HCT116 (cell line): ENCODE measurements at regions of chr15 and their contacts with region 1.

Region 1: GRCh38 chr15:74540761-74541493 is at the start of gene ARID3B:
- DNase-seq: peak; percentile 95
- ATAC-seq: peak; percentile 97
- H3K4me3 ChIP-seq: peak within 1 kb of the TSS; percentile 88 to 91
- H3K27ac ChIP-seq: peak within 1 kb of the TSS; percentile 72
- H3K4me1 ChIP-seq: peaks cover 15 to 36% of the 10 kb centered on the region in 2 experiments
- H3K27me3 ChIP-seq: peaks cover 10% of the 10 kb centered on the region; the same call in 1 of the 2 replicates
- CTCF ChIP-seq: no peak
- POLR2A ChIP-seq: peak; percentile 23
- RAD21 ChIP-seq: no peak
- total RNA-seq, gene ARID3B: 8.1 TPM

Region 2: DNA sequence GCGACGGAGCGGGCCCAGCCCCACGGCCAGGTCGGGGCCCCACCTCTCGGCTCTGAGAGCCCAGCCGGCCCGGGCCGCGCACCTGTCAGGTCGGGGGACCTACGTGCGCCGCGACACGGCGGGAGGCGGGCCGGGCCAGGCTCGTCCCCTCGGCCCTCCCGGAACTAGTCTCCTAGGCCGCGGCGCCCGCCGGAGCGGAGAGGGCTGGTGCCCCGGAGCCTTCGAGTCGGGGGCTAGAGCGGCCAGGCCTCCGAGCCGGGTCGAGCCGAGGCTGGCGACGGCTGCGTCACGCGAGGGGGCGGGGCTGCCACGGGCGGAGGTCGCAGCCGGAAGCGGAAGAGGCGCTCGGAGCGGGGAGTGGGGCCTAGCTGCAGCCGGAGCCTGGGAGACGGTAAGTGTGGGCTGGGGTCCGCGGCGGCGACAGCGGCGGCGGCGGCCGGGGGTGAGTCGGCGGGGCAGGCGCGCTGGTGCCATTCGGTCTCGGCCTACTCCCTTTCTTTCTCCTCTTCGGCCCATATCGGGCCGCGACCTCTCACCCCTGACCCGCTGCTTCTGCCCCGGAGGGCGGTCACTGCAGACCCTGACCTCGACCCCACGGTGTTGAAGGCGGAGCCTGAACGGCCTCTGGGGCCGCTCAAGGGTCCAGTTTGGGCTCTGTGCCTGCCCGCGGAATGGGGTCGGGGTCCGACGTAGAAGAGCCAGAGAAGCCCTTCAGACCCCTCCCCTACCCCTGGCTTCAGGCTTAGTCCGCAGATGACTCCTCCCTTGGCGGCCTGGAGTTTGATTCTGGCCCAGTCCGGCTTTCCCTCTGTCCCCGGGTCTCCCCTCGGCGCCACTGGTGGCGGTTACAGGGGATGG is 74.8 kb after region 1 on chr15 and contains the start of gene CLK3:
- CTCF ChIA-PET with region 1: no interaction called
- POLR2A ChIA-PET with region 1: interaction called, 4 read pairs
- RAD21 ChIA-PET with region 1: interaction called in 1 of 2 experiments, 3 read pairs
- intact Hi-C with region 1: loop called (anchors 2 kb)
- DNase-seq: peak; percentile 86
- ATAC-seq: peak; percentile 92
- H3K4me3 ChIP-seq: peak within 1 kb of the TSS; percentile 99
- H3K27ac ChIP-seq: peak within 1 kb of the TSS; percentile 90
- H3K4me1 ChIP-seq: peaks cover 9 to 29% of the 10 kb centered on the region in 2 experiments; a peak in 3 of 4 replicates
- H3K27me3 ChIP-seq: no peaks in the 10 kb centered on the region
- CTCF ChIP-seq: no peak
- POLR2A ChIP-seq: no peak
- RAD21 ChIP-seq: no peak
- total RNA-seq, gene CLK3: 79.3 TPM